Esophagus muscularis mucosa (tissue), 4 donors: ENCODE measurements at regions of chr16 and their contacts with region 1.

Region 1: DNA sequence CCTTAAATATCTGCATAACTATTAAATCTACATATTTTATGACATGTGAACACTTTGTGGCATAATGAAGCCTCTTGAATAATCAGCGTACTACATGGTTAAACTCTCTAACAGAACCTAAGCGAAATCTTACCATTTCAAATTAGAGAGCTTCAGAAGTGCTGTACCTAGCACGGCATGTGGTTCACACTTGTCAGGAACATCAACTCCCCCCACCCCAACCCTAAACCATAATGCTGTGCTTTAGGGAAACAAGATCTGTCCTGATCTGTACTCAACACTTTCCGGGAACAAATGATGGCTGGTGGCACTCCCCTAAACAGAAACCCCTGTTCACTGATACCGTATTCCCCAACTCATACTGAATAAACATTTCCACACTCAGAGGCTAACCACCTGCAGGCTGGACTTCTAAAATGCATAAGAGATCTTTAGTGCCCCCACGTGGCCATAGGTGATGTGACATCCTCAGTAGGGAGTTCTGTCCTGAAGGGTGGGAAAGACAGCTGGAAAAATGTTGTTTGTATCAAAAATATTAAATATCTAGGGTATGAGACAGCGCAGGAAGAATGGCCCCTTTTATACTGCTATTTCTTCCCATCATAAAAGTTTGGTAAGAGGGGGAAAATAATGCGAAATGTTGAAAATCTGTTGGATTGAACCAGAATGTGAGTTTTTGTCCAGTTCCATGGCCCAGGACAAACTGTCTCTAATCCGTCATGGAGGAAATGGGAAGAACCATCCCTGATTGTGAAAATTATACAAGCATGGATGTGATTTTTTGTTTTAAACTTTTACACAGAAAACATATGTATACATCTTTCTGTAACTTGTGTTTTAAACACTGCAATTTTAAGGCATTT is 88.6 kb downstream of the USP31 start:
- DNase-seq: peak; percentile 93
- H3K4me3 ChIP-seq: no peak overlapping the region
- H3K27ac ChIP-seq: no peak overlapping the region
- H3K4me1 ChIP-seq: peaks cover 0 to 23% (median 15%) of the 10 kb centered on the region in 4 donors
- H3K27me3 ChIP-seq: no peaks in the 10 kb centered on the region
- CTCF ChIP-seq: peak; percentile 78 to 82 (median 80)
- EP300 ChIP-seq: no peak
- POLR2A ChIP-seq: no peak

Region 2: GRCh38 chr16:22898874-22899348 is 161.8 kb before region 1 on chr16:
- intact Hi-C with region 1: loop called (anchors 5 kb)
- DNase-seq: no peak
- H3K4me3 ChIP-seq: no peak overlapping the region
- H3K27ac ChIP-seq: no peak overlapping the region
- H3K4me1 ChIP-seq: peaks cover 10 to 15% (median 10%) of the 10 kb centered on the region in 4 donors
- H3K27me3 ChIP-seq: peaks cover 0 to 70% (median 0%) of the 10 kb centered on the region in 4 donors
- CTCF ChIP-seq: peak; percentile 75 to 83 (median 78)
- EP300 ChIP-seq: no peak
- POLR2A ChIP-seq: no peak

Region 3: GRCh38 chr16:23174622-23175021 is 113.9 kb after region 1 on chr16:
- intact Hi-C with region 1: no loop called
- DNase-seq: no peak
- H3K4me3 ChIP-seq: no peak overlapping the region
- H3K27ac ChIP-seq: no peak overlapping the region
- H3K4me1 ChIP-seq: no peaks in the 10 kb centered on the region
- H3K27me3 ChIP-seq: peaks cover 0 to 34% (median 2%) of the 10 kb centered on the region in 4 donors
- CTCF ChIP-seq: no peak
- EP300 ChIP-seq: no peak
- POLR2A ChIP-seq: no peak